Activated B cell treated with CpG ODN at 0.5 μM for 24 hours (primary cell): ENCODE measurements at regions of chrX and their contacts with region 1.

Region 1: DNA sequence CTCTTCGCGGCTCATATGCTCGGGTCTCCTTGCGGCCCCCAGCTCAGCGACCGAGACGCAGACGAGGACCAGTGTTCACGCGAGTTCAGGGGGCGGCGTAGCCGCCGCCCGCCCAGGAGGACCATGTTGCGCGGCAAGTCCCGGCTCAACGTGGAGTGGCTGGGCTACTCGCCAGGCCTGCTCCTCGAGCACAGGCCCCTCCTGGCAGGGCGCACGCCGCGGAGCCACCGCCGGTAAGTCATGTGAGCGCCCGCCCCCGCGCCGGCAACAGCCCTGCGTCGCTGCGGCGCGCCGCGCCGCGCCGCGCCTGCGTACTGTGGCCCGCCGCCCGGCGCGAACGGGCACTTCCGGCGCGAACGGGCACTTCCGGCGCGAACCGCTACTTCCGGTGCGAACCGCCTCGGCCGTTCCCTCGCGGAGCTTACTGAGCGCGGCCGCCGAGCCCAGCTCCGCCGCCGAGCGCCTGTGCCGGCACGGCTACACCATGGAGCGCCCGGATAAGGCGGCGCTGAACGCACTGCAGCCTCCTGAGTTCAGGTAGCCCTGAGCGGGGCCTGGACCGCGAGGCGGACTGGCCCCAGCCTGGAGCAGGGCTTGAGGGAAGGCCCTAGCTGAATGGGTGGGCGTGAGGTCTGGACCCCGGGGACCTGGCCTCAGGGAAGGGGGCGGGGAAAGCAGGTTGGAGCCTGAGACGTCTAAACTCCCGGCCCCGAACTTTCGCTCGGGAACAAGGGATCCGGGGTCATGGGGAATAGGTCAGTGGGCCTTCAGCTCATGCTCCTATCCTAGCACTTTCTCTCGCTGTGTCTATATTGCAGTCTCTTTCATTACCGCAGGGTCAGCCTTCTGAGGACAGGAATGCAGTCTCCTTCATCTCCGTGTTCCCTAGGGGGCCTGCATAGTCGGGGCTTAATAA is at the start of gene VMA21:
- DNase-seq: peak; percentile 79
- ATAC-seq: peak; percentile 87
- H3K4me3 Mint-ChIP-seq: peak within 1 kb of the TSS; percentile 87
- H3K27ac Mint-ChIP-seq: peak within 1 kb of the TSS; percentile 95
- H3K4me1 Mint-ChIP-seq: peaks cover 43% of the 10 kb centered on the region
- H3K27me3 Mint-ChIP-seq: no peaks in the 10 kb centered on the region
- CTCF ChIP-seq: no peak
- total RNA-seq, gene VMA21: 26.1 and 26.5 TPM in 2 replicates

Region 2: DNA sequence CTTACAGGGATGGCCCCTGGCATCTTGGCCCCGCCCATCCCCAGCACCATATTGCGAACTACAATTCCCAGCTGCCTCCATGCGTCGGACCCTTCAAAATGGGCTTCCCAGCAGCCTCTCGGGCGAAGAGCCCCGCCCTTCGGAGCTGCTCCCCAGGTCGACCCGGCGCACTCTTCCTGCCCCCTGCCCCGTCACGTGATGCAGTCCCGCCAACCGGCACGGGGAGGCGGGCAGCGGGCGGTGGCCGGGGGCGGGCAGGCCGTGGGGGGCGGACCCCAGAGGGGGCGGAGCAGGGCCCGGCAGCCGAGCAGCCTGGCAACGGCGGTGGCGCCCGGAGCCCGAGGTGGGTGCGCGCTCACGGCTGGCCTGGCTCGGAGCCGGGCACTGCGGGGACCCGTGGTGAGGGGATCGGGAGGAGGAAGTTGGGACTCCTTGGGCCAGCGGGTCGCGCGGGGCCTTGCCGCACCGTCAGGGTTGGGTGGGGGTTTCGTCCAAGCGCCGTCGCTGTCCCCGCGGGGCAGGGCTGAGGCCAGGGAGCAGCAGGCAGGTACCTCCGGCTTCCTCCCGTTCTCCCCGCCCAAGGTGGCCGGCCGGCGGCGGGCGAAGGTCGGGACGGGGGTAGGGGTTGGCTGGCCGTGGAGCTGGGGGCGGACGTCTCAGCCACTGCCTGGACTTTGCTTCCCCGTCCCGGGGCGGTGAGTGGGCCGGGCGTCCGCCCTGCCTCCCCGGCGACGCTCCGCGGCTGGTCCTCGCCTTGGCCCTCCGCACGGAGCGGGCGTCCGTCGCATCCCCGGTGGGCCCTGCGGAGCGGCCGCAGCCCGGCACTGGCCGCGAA is 828.5 kb before region 1 on chrX and contains the start of gene MTM1:
- CTCF ChIA-PET with region 1: no interaction called
- POLR2A ChIA-PET with region 1: no interaction called
- intact Hi-C with region 1: loop called (anchors 2 kb)
- DNase-seq: peak; percentile 86
- ATAC-seq: peak; percentile 86
- H3K4me3 Mint-ChIP-seq: peak within 1 kb of the TSS; percentile 86
- H3K27ac Mint-ChIP-seq: peak within 1 kb of the TSS; percentile 89
- H3K4me1 Mint-ChIP-seq: peaks cover 45% of the 10 kb centered on the region
- H3K27me3 Mint-ChIP-seq: no peaks in the 10 kb centered on the region
- CTCF ChIP-seq: no peak
- total RNA-seq, gene MTM1: 22.0 and 24.4 TPM in 2 replicates

Region 3: DNA sequence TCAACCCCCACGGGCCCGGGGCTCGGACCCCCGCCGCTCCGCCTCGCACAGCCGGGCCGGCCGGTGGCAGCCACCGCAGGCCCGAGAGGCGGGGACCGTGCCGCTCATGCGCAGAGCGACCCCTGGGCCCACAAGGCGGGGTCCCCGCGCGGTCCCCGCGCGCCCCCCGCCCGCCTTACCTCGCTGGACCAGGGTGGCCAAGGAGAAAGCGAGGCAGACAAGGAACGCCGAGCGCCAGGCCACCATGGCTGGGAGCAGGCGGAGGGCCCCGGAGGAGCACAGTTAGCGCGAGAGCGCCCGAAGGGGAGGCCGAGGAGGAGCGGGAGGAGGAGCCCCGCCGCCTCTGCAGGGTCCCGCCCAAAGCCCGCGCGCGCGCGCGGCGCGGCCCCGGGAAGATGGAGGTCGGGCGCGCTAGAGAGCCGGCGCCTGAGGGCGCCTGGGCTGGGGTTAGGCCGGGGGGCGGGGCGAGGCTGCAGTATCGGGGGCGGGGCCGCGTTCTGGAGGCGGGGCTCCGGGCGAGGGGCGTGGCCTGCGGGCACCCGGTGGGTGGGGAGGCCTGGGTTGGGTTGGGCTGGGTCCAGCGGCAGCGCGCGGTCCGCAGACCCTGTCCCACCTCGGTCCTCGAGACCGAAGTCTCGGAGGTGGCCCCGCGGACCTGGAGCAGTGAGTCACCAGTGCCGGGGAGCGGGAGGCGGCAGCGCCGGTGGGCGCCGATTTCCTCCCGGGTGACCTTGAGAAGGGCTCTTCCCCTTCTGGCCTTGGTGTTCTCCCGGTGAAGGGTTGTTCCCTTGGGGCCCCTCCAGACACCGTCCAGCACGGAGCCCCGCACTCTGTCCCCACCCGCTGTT is 498.5 kb before region 1 on chrX and contains the start of gene CD99L2:
- CTCF ChIA-PET with region 1: no interaction called
- POLR2A ChIA-PET with region 1: interaction called, 3 read pairs
- intact Hi-C with region 1: loop called (anchors 2 kb)
- DNase-seq: peak; percentile 84
- ATAC-seq: peak; percentile 91
- H3K4me3 Mint-ChIP-seq: peak within 1 kb of the TSS; percentile 90
- H3K27ac Mint-ChIP-seq: peak within 1 kb of the TSS; percentile 69
- H3K4me1 Mint-ChIP-seq: peaks cover 2% of the 10 kb centered on the region
- H3K27me3 Mint-ChIP-seq: peaks cover 6% of the 10 kb centered on the region
- CTCF ChIP-seq: no peak
- total RNA-seq, gene CD99L2: 12.5 and 12.7 TPM in 2 replicates

Region 4: DNA sequence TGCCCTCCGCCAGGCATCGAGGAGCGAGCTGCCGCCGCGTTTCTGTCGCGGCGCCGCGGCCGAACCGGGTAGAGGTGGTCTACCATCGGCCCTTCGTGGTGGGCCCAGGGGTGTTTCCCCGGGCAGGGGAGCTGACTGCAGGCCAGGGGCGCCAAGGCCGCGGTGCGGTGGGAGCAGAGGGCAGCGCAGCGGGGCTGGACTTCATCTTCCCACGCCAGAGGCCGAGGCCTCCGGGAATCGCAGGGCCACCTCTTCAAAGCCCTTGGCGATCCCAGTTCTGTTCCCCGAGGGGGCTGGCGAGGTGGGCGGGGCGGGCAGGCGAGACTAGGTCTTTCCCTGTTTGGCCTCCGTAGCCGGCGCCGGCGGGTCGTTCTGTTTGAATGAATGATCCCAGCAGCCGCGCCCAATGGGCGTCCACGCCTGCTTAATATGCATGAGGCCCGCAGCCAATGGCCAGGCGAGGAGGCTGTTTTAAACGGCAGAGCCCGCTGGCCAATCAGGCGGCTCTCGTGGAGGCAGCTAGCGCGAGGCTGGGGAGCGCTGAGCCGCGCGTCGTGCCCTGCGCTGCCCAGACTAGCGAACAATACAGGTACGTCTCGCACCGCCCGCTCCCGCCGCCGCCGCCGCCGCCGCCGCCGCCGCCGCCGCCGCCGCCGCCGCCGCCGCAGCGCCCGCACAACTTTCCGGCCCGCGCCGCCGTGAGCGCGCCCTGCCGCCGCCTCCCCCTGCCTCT is 414.1 kb before region 1 on chrX and contains the start of gene HMGB3:
- CTCF ChIA-PET with region 1: no interaction called
- POLR2A ChIA-PET with region 1: no interaction called
- intact Hi-C with region 1: loop called (anchors 2 kb)
- DNase-seq: peak; percentile 59
- ATAC-seq: peak; percentile 97
- H3K4me3 Mint-ChIP-seq: peak within 1 kb of the TSS; percentile 64
- H3K27ac Mint-ChIP-seq: no peak within 1 kb of the TSS
- H3K4me1 Mint-ChIP-seq: peaks cover 12% of the 10 kb centered on the region
- H3K27me3 Mint-ChIP-seq: peaks cover 11% of the 10 kb centered on the region
- CTCF ChIP-seq: no peak
- total RNA-seq, gene HMGB3: 1.7 and 2.5 TPM in 2 replicates

Region 5: GRCh38 chrX:152830312-152831305 is 1433.5 kb after region 1 on chrX and contains the starts of genes CETN2 and NSDHL:
- CTCF ChIA-PET with region 1: no interaction called
- POLR2A ChIA-PET with region 1: interaction called, 6 read pairs
- intact Hi-C with region 1: loop called (anchors 2 kb)
- DNase-seq: peak; percentile 84
- ATAC-seq: peak; percentile 97
- H3K4me3 Mint-ChIP-seq: peak within 1 kb of the TSS; percentile 94
- H3K27ac Mint-ChIP-seq: peak within 1 kb of the TSS; percentile 94
- H3K4me1 Mint-ChIP-seq: peaks cover 29% of the 10 kb centered on the region
- H3K27me3 Mint-ChIP-seq: no peaks in the 10 kb centered on the region
- CTCF ChIP-seq: no peak
- total RNA-seq, gene CETN2: 13.3 and 16.1 TPM in 2 replicates
- total RNA-seq, gene NSDHL: 17.8 and 18.4 TPM in 2 replicates